CD8-positive, alpha-beta T cell (primary cell): ENCODE measurements at regions of chr19 and their contacts with region 1.

Region 1: GRCh38 chr19:49118565-49119410 is at the start of gene C19orf73:
- DNase-seq: peak; percentile 93 to 98 (median 94)
- ATAC-seq: peak; percentile 83
- H3K4me3 ChIP-seq: peak within 1 kb of the TSS; percentile 68 to 87
- H3K4me3 Mint-ChIP-seq: peak within 1 kb of the TSS; percentile 86
- H3K27ac ChIP-seq: peak within 1 kb of the TSS; percentile 84 to 98
- H3K27ac Mint-ChIP-seq: peak within 1 kb of the TSS; percentile 92
- H3K4me1 ChIP-seq: peaks cover 15% of the 10 kb centered on the region
- H3K4me1 Mint-ChIP-seq: peaks cover 36% of the 10 kb centered on the region
- H3K27me3 ChIP-seq: no peaks in the 10 kb centered on the region
- H3K27me3 Mint-ChIP-seq: no peaks in the 10 kb centered on the region
- CTCF ChIP-seq: peak; percentile 49
- total RNA-seq, gene C19orf73: 0.60 to 0.81 TPM

Region 2: GRCh38 chr19:48965040-48965805 is 153.6 kb before region 1 on chr19 and contains the start of gene FTL:
- CTCF ChIA-PET with region 1: no interaction called
- POLR2A ChIA-PET with region 1: no interaction called
- intact Hi-C with region 1: no loop called
- DNase-seq: peak; percentile 71 to 96 (median 88)
- ATAC-seq: peak; percentile 73
- H3K4me3 ChIP-seq: peak within 1 kb of the TSS; percentile 83 to 98
- H3K4me3 Mint-ChIP-seq: peak within 1 kb of the TSS; percentile 99
- H3K27ac ChIP-seq: peak within 1 kb of the TSS; percentile 84 to 90
- H3K27ac Mint-ChIP-seq: peak within 1 kb of the TSS; percentile 99
- H3K4me1 ChIP-seq: peaks cover 49% of the 10 kb centered on the region
- H3K4me1 Mint-ChIP-seq: peaks cover 60% of the 10 kb centered on the region
- H3K27me3 ChIP-seq: no peaks in the 10 kb centered on the region
- H3K27me3 Mint-ChIP-seq: no peaks in the 10 kb centered on the region
- CTCF ChIP-seq: no peak
- total RNA-seq, gene FTL: 665 to 668 TPM

Region 3: GRCh38 chr19:49085020-49085867 is 33.5 kb before region 1 on chr19 and contains the start of gene SNRNP70:
- CTCF ChIA-PET with region 1: interaction called, 3 read pairs
- POLR2A ChIA-PET with region 1: interaction called, 4 read pairs
- intact Hi-C with region 1: loop called (anchors 1 kb)
- DNase-seq: peak; percentile 97 to 100 (median 99)
- ATAC-seq: peak; percentile 97
- H3K4me3 ChIP-seq: peak within 1 kb of the TSS; percentile 85 to 91
- H3K4me3 Mint-ChIP-seq: peak within 1 kb of the TSS; percentile 96
- H3K27ac ChIP-seq: peak within 1 kb of the TSS; percentile 74 to 90
- H3K27ac Mint-ChIP-seq: peak within 1 kb of the TSS; percentile 96
- H3K4me1 ChIP-seq: peaks cover 33% of the 10 kb centered on the region
- H3K4me1 Mint-ChIP-seq: peaks cover 33% of the 10 kb centered on the region
- H3K27me3 ChIP-seq: no peaks in the 10 kb centered on the region
- H3K27me3 Mint-ChIP-seq: peaks cover 4% of the 10 kb centered on the region
- CTCF ChIP-seq: no peak
- total RNA-seq, gene SNRNP70: 341 to 350 TPM

Region 4: GRCh38 chr19:49133621-49134454 is 15.1 kb after region 1 on chr19:
- CTCF ChIA-PET with region 1: interaction called, 15 read pairs
- POLR2A ChIA-PET with region 1: interaction called, 4 read pairs
- intact Hi-C with region 1: no loop called
- DNase-seq: peak in 6 of 9 experiments; percentile 48 to 70 (median 60)
- ATAC-seq: peak; percentile 77
- H3K4me3 ChIP-seq: peak overlapping the region; percentile 25 to 50
- H3K4me3 Mint-ChIP-seq: peak overlapping the region; percentile 74
- H3K27ac ChIP-seq: no peak overlapping the region
- H3K27ac Mint-ChIP-seq: no peak overlapping the region
- H3K4me1 ChIP-seq: peaks cover 15% of the 10 kb centered on the region
- H3K4me1 Mint-ChIP-seq: peaks cover 16% of the 10 kb centered on the region
- H3K27me3 ChIP-seq: no peaks in the 10 kb centered on the region
- H3K27me3 Mint-ChIP-seq: peaks cover 14% of the 10 kb centered on the region
- CTCF ChIP-seq: no peak

Region 5: DNA sequence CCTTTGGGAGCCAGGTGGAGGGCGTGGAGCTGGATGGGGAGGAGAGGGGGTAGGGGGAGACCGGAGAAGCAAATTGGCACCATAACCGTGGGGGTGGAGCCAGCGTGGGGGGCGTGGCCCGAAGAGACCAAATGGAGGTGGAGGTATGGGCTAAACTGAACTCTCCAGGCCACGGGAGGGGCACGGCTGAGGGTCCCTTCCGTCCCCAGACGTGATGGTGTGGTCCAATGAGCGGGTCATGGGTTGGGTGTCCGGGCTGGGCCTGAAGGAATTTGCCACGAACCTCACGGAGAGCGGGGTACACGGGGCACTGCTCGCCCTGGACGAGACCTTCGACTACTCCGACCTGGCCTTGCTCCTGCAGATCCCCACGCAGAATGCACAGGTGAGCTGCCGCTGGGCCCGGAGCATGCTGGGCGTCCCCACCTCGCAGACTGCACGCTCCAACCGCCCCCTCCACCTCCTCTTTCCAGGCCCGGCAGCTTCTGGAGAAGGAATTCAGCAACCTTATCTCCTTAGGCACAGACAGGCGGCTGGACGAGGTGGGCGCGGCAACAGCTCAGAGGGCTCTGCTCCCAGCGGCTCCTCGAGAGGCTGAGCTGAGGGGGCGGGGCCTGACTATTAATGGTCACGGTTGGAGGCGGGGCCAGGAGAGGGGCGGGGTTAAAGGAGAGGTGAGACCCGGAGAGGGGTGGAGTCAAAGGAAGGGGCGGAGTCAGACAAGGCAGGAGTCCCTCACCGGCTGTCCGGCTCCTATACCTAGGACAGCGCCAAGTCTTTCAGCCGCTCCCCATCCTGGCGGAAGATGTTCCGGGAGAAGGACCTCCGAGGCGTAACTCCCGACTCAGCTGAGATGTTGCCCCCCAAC is 30.2 kb after region 1 on chr19:
- CTCF ChIA-PET with region 1: interaction called, 19 read pairs
- POLR2A ChIA-PET with region 1: no interaction called
- intact Hi-C with region 1: loop called (anchors 2 to 5 kb)
- DNase-seq: peak; percentile 53 to 86 (median 77)
- ATAC-seq: peak; percentile 61
- H3K4me3 ChIP-seq: peak overlapping the region; percentile 60 to 64
- H3K4me3 Mint-ChIP-seq: peak overlapping the region; percentile 78
- H3K27ac ChIP-seq: no peak overlapping the region
- H3K27ac Mint-ChIP-seq: no peak overlapping the region
- H3K4me1 ChIP-seq: peaks cover 47% of the 10 kb centered on the region
- H3K4me1 Mint-ChIP-seq: peaks cover 34% of the 10 kb centered on the region
- H3K27me3 ChIP-seq: peaks cover 36 to 39% of the 10 kb centered on the region in 2 experiments
- H3K27me3 Mint-ChIP-seq: peaks cover 65% of the 10 kb centered on the region
- CTCF ChIP-seq: no peak

Region 6: DNA sequence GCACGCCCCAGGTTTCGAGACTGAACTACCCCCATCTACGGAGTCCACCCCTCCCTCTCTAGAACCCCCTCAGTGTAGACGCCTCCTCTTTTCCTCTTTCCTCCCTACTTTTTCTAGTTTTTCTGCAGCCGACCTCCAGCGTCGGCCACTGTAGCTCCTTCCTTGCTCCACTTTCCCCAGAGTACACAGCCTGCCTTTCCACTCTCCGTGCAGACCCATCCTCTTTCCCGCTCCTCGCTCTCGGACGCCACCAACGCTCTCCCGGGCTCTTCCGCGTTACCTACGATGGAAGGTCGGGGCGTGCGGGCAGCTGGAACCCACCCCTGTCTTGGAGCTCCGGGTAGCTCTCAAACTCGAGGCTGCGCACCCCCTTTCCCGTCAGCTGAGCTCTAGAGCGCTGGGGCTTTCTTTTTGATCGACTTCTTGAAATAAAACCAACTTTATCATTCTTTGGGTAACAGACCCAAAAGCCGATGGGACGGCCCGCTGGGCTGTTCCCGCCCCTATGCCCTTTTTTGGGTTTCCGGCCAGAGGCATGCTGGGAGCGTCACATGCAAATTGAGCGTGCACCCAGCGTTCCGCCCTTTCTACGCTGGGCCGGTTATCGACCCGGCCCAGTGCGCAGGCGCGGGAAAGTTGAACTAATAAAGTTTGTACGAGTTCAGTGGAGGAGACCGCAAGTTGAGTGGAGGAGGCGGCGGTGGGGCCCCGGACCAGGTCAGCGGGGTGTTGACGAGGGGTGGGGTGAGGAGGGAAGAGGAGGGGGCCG is 546.7 kb after region 1 on chr19 and contains the starts of genes BCL2L12 and IRF3:
- CTCF ChIA-PET with region 1: no interaction called
- POLR2A ChIA-PET with region 1: no interaction called
- intact Hi-C with region 1: loop called in 1 of 2 experiments (anchors 10 kb)
- DNase-seq: peak; percentile 98 to 100 (median 99)
- ATAC-seq: peak; percentile 80
- H3K4me3 ChIP-seq: peak within 1 kb of the TSS; percentile 86 to 95
- H3K4me3 Mint-ChIP-seq: peak within 1 kb of the TSS; percentile 99
- H3K27ac ChIP-seq: peak within 1 kb of the TSS; percentile 77 to 93
- H3K27ac Mint-ChIP-seq: peak within 1 kb of the TSS; percentile 99
- H3K4me1 ChIP-seq: peaks cover 29% of the 10 kb centered on the region
- H3K4me1 Mint-ChIP-seq: peaks cover 38% of the 10 kb centered on the region
- H3K27me3 ChIP-seq: no peaks in the 10 kb centered on the region
- H3K27me3 Mint-ChIP-seq: no peaks in the 10 kb centered on the region
- CTCF ChIP-seq: no peak
- total RNA-seq, gene BCL2L12: 13.1 to 14.7 TPM
- total RNA-seq, gene IRF3: 92.0 to 99.5 TPM

Region 7: GRCh38 chr19:49850473-49851342 is 731.9 kb after region 1 on chr19 and contains the start of gene PTOV1:
- CTCF ChIA-PET with region 1: no interaction called
- POLR2A ChIA-PET with region 1: no interaction called
- intact Hi-C with region 1: loop called in 1 of 2 experiments (anchors 5 kb)
- DNase-seq: peak; percentile 73 to 94 (median 86)
- ATAC-seq: peak; percentile 87
- H3K4me3 ChIP-seq: peak within 1 kb of the TSS; percentile 98 to 99
- H3K4me3 Mint-ChIP-seq: peak within 1 kb of the TSS; percentile 93
- H3K27ac ChIP-seq: peak within 1 kb of the TSS; percentile 96 to 99
- H3K27ac Mint-ChIP-seq: peak within 1 kb of the TSS; percentile 96
- H3K4me1 ChIP-seq: peaks cover 30% of the 10 kb centered on the region
- H3K4me1 Mint-ChIP-seq: peaks cover 35% of the 10 kb centered on the region
- H3K27me3 ChIP-seq: no peaks in the 10 kb centered on the region
- H3K27me3 Mint-ChIP-seq: no peaks in the 10 kb centered on the region
- CTCF ChIP-seq: no peak
- total RNA-seq, gene PTOV1: 112 to 116 TPM